A549 (cell line): ENCODE measurements at regions of chr11 and their contacts with region 1.

Region 1: DNA sequence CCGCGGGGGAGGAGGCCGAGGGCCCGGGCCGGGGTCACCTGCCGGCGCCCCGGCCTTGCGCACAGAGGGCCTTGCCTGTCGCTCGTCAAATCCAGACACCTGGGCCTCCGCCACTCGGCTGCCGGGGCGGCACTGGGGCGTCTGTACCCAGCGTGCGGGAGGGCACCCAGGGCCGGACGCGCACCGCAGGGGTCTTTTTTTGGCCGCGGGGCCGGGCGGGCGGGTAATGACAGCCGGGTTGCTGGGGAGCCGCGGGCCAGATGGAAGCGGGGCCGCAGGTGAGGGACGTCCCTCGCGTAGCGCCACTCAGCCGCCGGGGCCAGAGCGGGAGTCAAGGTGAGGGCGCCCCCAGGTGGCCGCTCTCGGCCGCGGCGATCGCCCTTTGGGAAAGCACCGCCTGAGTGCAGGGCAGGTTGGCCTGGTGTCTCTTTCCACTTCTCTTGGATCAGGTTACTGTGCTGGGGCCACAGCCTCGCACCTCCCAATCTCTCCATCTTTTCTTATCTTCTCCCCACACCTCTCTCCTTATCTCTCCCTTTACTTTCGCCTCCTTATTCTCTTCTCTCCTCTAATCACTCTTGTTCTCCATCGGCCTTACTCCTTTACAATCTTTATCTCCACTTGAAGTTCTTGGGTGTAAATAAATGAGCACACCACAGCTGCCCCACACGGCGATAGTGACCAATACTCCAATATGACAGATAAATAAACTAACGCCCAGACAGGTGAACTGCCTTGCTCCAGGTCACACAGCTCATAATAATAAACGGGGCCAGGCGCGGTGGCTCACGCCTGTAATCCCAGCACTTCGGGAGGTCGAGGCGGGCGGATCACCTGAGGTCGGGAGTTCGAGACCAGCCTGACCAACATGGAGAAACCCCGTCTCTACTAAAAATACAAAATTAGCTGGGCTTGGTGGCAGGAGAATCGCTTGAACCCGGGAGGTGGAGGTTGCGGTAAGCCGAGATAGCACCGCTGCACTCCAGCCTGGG is 3.7 kb downstream of the PHLDB1 start:
- DNase-seq: peak; percentile 29 to 63
- ATAC-seq: peak; percentile 16 to 62; a peak in 4 of 6 replicates
- H3K4me3 ChIP-seq: no peak overlapping the region
- H3K27ac ChIP-seq: peak overlapping the region in 1 of 2 experiments; percentile 66; a peak in 3 of 6 replicates
- H3K4me1 ChIP-seq: peaks cover 45% of the 10 kb centered on the region
- CTCF ChIP-seq: peak; percentile 68
- EP300 ChIP-seq: no peak
- POLR2A ChIP-seq: no peak
- RAD21 ChIP-seq: peak; percentile 30 to 47; a peak in 4 of 5 replicates

Region 2: DNA sequence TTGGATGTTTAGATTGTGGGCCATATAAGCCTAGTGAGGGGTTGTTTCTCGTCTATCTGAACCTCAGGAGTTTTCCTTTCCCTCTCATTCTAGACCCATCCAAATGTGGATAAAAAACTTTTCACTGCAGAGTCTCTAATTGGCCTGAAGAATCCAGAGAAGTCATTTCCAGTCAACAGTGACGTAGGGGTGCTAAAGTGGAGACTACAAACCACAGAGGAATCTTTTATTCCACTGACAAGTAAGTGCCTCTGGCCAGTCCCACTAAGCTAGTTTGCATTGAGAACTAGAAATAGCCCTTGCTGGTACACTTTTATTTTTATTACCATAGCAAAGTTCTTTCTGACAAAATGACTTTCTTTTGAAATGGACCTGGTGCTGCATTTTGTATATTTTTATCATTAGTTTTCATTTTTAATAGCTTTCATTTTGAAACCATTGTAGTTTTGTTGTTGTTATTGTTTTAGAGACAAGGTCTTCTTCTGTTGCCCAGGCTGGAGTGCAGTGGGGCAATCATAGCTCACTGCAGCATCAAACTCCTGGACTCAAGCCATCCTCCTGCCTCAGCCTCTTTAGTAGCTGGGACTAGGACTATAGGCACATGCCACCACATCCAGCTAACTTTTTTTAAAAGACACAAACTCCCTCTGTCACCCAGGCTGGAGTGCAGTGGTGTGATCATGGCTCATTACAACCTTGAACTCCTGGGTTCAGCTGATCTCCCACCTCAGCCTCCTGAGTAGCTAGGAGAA is 18.3 kb before region 1 on chr11:
- CTCF ChIA-PET with region 1: interaction called, 62 read pairs
- POLR2A ChIA-PET with region 1: no interaction called
- DNase-seq: no peak
- ATAC-seq: no peak
- H3K4me3 ChIP-seq: no peak overlapping the region
- H3K27ac ChIP-seq: no peak overlapping the region
- H3K4me1 ChIP-seq: no peaks in the 10 kb centered on the region
- CTCF ChIP-seq: no peak
- EP300 ChIP-seq: no peak
- POLR2A ChIP-seq: no peak
- RAD21 ChIP-seq: no peak

Region 3: GRCh38 chr11:118621071-118621783 is 10.1 kb after region 1 on chr11:
- CTCF ChIA-PET with region 1: interaction called, 224 read pairs
- POLR2A ChIA-PET with region 1: interaction called, 14 read pairs
- DNase-seq: no peak
- ATAC-seq: no peak
- H3K4me3 ChIP-seq: no peak overlapping the region
- H3K27ac ChIP-seq: peak overlapping the region; percentile 69 to 92; a peak in 5 of 6 replicates
- H3K4me1 ChIP-seq: peaks cover 78% of the 10 kb centered on the region
- CTCF ChIP-seq: no peak
- EP300 ChIP-seq: no peak
- POLR2A ChIP-seq: no peak
- RAD21 ChIP-seq: no peak